ENCODE measurements at regions of chr7 and their contacts with region 1.

Region 1: DNA sequence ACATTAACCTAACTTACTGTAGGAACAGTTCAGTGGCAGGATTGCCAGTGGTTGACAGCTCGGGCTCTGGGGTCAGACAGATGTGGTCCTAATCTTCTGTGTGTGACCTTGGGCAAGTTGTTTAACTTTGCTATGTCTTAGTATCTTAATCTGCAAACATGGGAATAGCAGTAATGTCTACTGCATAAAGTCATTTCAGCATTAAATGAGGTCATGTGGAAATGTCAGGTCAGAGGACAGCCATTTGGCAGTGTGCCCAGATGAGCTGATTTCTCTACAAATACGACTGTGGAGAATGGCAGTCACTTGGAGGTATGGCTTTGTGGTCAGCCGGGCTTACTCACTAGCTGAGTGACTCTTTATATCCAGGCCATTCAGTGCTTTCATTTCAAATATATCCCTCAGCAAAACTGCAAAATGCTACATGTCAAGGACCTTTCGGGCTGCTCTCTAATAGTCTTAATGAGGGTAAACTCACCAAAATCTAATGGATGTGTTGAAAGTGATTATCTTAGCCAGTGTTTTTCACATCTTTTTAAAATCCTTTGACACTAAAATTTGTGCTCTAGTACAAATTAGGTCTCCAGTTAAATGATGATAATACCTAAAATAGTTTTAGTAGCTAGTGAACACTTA is 171.4 kb downstream of the ST7 start:
- DNase-seq: peak; percentile 33
- H3K4me3 Mint-ChIP-seq: no peak overlapping the region
- H3K27ac Mint-ChIP-seq: no peak overlapping the region
- H3K4me1 Mint-ChIP-seq: peaks cover 3% of the 10 kb centered on the region
- H3K27me3 Mint-ChIP-seq: no peaks in the 10 kb centered on the region

Region 2: DNA sequence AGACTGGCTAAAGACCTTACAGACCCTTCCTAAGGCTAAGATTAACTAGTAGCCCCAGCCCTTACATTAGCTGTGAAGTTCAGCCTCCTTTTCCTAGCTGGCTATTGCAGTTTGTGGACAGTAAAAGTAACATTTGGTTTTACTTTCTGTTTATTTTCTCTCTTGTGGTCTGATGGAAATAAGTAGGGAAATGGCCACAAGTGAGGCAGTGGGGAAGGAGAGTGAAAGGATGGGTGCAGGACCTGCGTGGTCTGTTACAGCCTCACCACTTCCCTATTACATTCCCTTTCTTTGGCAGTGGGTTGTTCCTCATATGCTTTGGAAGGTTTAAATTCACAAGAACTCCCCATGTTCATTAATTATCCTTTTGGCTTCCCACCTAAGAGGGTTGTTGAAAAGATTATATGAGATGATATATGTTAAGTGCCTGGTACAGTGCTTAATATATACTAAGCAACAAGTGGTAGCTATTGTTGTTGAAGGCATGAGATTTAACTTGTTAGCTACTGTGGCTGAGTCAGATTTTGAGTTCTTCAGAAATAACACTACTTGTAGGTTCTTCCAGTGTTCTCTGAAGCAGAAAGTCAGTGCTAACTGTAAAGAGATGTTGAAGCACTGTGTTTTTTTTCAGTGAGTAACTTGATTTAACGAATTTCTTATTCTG is 10.3 kb after region 1 on chr7:
- CTCF ChIA-PET with region 1: interaction called, 16 read pairs
- POLR2A ChIA-PET with region 1: no interaction called
- DNase-seq: no peak
- H3K4me3 Mint-ChIP-seq: no peak overlapping the region
- H3K27ac Mint-ChIP-seq: no peak overlapping the region
- H3K4me1 Mint-ChIP-seq: peaks cover 10% of the 10 kb centered on the region
- H3K27me3 Mint-ChIP-seq: no peaks in the 10 kb centered on the region

Region 3: DNA sequence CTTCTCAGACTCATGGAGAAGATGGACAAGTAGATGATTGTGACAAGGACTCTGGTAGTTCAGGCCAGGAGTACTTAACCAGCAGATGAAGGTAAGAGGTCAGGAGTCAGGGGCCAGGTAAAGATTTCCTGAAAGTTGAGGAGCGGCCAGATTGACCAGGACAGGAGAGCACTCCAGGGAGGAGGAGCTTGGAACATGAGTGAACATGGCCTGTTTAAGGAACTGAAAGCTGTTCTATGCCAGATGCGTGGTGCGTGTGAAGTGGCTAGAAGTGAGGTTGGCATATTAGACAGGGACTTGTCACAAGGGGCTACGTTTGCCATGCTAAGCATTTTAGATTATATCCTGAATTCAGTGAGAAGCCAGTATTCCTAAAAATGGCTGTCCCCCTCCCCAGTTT is 41.0 kb after region 1 on chr7:
- CTCF ChIA-PET with region 1: no interaction called
- POLR2A ChIA-PET with region 1: no interaction called
- DNase-seq: no peak
- H3K4me3 Mint-ChIP-seq: no peak overlapping the region
- H3K27ac Mint-ChIP-seq: no peak overlapping the region
- H3K4me1 Mint-ChIP-seq: no peaks in the 10 kb centered on the region
- H3K27me3 Mint-ChIP-seq: no peaks in the 10 kb centered on the region

Measured in activated CD4-positive, alpha-beta T cell treated with anti-CD3 and anti-CD28 coated beads, Interleukin-2, amount 10 ng/mL, durations not matched to agents 7 days and 5 days (primary cell).